ENCODE measurements at regions of chr11 and their contacts with region 1.

Region 1: GRCh38 chr11:65615229-65615941 is at the start of gene PCNX3:
- DNase-seq: peak; percentile 100
- H3K4me3 Mint-ChIP-seq: peak within 1 kb of the TSS; percentile 98
- H3K27ac Mint-ChIP-seq: peak within 1 kb of the TSS; percentile 94
- H3K4me1 Mint-ChIP-seq: peaks cover 27% of the 10 kb centered on the region
- H3K27me3 Mint-ChIP-seq: no peaks in the 10 kb centered on the region
- total RNA-seq, gene PCNX3: 40.1 and 43.6 TPM in 2 replicates

Region 2: DNA sequence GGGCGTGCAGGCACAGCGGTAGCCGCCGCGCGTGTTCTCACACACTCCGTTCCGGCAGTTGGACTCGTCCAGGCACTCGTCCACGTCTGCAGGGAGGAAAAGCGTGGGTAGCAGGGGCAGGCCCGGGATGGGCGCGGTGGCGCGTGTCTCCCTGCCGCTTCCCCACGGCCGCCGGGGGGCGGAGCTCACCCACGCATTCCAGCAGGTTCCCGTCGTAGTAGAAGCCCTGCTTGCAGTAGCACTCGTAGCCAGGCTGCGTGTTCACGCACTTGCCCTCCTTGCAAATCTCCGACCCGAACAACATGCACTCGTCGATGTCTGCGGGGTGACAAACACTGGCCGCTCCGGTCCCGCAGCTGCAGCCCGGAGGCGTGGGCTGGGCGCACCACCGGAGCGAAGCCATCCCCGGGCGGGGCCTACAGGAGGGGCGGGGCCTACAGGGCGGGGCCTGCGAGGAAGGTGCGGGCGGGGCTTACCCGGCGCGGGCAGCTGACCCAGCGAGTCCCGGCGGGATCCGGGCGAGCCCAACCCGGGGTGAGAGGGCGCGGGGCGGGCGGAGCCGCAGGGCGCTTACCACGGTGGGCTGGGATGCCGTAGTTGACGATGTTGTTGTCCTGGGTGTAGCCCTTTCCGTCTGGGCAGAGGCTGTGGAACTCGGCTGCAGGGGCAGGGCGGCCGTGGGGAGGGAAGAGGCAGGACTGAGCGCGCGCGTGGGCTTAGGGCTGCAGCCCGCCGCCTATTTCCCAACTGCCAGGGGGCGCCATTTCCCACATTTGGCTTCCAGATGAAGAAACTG is 74.9 kb before region 1 on chr11:
- intact Hi-C with region 1: loop called (anchors 2 kb)
- DNase-seq: peak; percentile 86
- H3K4me3 Mint-ChIP-seq: peak overlapping the region; percentile 81
- H3K27ac Mint-ChIP-seq: peak overlapping the region; percentile 70
- H3K4me1 Mint-ChIP-seq: peaks cover 18% of the 10 kb centered on the region
- H3K27me3 Mint-ChIP-seq: no peaks in the 10 kb centered on the region

Region 3: GRCh38 chr11:65575568-65576231 is 39.7 kb before region 1 on chr11 and contains the start of gene EHBP1L1:
- intact Hi-C with region 1: loop called (anchors 1 kb)
- DNase-seq: peak; percentile 76
- H3K4me3 Mint-ChIP-seq: peak within 1 kb of the TSS; percentile 91
- H3K27ac Mint-ChIP-seq: peak within 1 kb of the TSS; percentile 95
- H3K4me1 Mint-ChIP-seq: peaks cover 46% of the 10 kb centered on the region
- H3K27me3 Mint-ChIP-seq: no peaks in the 10 kb centered on the region
- total RNA-seq, gene EHBP1L1: 163 and 168 TPM in 2 replicates

Region 4: DNA sequence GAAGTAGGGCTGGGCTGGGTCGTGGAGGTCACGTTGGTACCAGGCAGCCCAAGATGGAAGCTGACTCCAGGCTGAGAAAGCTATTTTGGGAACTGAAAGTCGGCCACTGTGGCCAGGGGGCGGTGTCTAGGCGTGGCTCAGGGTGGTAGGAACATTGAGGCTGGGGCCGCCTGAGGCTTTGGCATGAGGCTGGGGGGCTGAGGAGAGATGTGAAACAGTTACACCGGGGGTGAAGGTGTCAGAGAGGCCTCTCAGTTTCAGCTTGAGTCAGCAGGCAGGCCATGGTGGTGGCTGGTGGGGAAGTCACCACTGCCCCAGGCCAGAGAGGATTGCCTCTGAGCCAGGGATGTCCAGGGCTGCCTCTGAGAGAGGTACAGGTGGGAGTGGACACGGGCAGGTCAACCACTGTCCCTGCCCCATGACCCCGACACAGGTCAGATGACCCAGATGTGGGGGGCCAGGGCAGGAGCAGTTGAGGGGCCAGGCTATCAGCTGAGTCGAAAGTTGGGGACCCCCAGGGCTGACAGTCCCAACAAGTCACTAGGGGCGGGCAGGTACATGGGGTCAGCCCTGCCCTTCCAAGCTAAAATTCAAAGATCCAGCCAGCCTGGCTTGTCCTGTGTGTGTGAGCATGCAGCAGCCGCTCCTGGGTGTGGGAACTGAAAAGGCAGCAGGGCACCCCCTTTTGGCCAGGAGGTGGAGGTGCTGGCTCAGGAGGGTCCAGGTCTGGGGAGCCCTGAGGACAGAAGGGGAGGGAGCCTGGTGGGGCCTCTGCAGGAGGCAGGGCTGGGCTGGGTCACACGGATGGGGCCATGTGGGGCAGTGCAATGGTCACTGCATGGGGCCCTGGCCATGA is 27.0 kb before region 1 on chr11:
- intact Hi-C with region 1: loop called (anchors 2 kb)
- DNase-seq: peak; percentile 70
- H3K4me3 Mint-ChIP-seq: peak overlapping the region; percentile 69
- H3K27ac Mint-ChIP-seq: peak overlapping the region; percentile 93
- H3K4me1 Mint-ChIP-seq: peaks cover 37% of the 10 kb centered on the region
- H3K27me3 Mint-ChIP-seq: no peaks in the 10 kb centered on the region

Region 5: DNA sequence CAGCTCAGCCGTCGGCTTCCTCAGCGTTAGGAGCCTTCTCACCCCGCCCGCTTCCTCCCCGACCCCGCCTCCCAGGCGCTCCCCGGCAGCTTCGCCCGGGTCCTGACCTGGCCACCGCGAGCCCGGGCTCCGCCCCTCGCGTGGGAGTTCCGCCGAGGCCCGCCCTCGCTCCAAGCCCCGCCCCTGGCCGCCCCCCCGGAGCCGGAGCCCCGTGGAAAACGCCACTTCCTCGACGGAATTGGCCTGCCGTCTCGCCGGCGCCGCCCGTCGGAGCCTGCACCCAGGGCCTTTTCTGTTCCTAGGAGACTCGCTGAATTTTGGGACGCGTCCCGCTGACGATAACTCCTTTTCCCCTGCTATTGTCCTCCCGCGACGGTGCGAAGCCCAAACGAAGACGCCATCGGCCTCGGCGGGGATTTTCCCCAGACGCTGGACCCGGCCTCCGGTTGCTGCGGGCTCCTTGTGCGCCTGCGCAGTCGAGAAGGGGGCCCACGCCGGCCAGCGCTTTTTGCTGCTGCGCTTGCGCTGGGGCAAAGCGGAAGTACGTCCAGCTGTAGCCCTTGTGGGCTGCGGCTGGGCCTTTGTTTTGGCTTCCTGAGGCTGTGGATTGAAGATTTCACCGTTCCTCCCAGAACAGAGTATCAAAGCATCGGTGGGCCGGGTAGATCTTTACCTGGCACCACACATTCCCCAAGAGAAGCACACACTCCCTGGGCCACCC is 37.3 kb after region 1 on chr11:
- intact Hi-C with region 1: loop called (anchors 1 kb)
- DNase-seq: peak; percentile 96
- H3K4me3 Mint-ChIP-seq: peak overlapping the region; percentile 79
- H3K27ac Mint-ChIP-seq: peak overlapping the region; percentile 88
- H3K4me1 Mint-ChIP-seq: peaks cover 30% of the 10 kb centered on the region
- H3K27me3 Mint-ChIP-seq: no peaks in the 10 kb centered on the region

Region 6: DNA sequence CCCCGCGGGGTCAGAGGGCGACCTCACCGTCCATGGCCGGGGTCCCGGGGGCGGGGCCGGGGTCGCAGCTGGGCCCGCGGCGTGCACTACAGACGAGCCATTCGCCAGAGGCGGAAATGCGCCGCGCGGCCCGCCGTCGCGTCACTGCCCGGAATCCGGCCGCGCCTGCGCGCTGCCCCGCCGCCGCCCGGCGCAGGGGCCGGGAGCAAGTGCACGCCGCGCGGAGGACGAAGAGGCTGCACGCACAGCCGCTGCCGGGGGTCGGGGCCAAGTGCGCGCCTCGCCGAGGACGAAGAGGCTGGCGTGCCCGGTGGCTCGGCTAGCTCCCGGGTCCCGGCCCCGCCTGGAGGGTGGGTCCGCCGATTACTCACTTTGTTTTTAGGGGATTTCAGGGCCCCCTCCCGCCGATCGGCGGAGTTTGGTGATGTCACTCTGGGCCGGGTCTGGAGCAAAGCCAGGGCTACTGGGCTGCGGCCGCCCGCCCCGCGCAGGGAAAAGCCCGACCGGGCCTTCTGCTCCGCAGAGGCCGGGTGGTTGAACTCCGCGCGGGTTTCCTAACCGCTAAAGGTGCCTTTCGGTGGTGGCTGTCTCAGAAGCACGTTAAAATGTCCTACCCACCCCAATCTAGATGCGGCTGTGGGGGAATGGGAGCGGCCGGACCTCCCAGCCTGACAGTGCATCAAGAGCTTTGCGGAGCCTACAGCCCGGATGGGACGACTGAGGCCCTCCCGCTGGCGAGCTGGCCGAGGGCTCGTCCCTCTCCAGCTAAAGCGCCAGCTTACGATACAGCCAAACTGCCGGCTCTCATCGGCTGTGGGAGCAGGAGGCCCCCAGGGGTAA is 47.6 kb after region 1 on chr11 and contains the start of gene RELA:
- intact Hi-C with region 1: loop called (anchors 2 kb)
- DNase-seq: peak; percentile 87
- H3K4me3 Mint-ChIP-seq: peak within 1 kb of the TSS; percentile 86
- H3K27ac Mint-ChIP-seq: peak within 1 kb of the TSS; percentile 92
- H3K4me1 Mint-ChIP-seq: peaks cover 19% of the 10 kb centered on the region
- H3K27me3 Mint-ChIP-seq: no peaks in the 10 kb centered on the region
- total RNA-seq, gene RELA: 86.9 and 89.3 TPM in 2 replicates

Region 7: GRCh38 chr11:66268283-66268951 is 653.0 kb after region 1 on chr11 and contains the start of gene RAB1B:
- intact Hi-C with region 1: loop called (anchors 1 kb)
- DNase-seq: peak; percentile 100
- H3K4me3 Mint-ChIP-seq: peak within 1 kb of the TSS; percentile 91
- H3K27ac Mint-ChIP-seq: peak within 1 kb of the TSS; percentile 84
- H3K4me1 Mint-ChIP-seq: peaks cover 24% of the 10 kb centered on the region
- H3K27me3 Mint-ChIP-seq: no peaks in the 10 kb centered on the region
- total RNA-seq, gene RAB1B: 134 and 139 TPM in 2 replicates

Measured in activated T-helper 2 cell treated with anti-CD3 and anti-CD28 coated beads, Interferon-gamma antibody, Interleukin-2, Interleukin-4, amounts not matched to agents 10 μg/mL and 5 μg/mL and 100 μg/mL, durations not matched to agents 14 hours and 24 hours and 36 hours (primary cell).